ENCODE measurements at regions of chr15 and their contacts with region 1.

Region 1: DNA sequence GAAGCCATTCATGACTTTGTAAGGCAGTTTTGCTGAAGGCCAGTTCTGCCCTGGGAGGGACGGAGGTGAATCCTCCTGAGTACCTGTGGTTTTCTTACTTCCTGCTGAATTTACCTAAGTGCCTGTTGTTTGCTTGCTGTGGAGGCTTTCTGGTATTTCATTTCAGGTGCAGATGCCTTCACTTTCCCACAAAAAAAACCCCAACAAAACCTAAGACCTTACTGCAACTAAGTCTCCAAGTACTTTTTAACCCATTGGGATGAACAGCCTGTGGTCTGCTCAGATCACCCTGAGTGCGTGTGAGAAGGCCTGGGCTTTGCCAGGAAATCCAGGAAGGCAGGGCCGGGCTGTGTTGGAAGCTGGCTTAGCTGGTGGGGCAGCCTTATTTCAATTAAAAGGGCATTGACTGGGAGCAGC is 65.3 kb downstream of the IGF1R start:
- DNase-seq: peak; percentile 47
- ATAC-seq: peak in 1 of 2 donors; percentile 34

Region 2: DNA sequence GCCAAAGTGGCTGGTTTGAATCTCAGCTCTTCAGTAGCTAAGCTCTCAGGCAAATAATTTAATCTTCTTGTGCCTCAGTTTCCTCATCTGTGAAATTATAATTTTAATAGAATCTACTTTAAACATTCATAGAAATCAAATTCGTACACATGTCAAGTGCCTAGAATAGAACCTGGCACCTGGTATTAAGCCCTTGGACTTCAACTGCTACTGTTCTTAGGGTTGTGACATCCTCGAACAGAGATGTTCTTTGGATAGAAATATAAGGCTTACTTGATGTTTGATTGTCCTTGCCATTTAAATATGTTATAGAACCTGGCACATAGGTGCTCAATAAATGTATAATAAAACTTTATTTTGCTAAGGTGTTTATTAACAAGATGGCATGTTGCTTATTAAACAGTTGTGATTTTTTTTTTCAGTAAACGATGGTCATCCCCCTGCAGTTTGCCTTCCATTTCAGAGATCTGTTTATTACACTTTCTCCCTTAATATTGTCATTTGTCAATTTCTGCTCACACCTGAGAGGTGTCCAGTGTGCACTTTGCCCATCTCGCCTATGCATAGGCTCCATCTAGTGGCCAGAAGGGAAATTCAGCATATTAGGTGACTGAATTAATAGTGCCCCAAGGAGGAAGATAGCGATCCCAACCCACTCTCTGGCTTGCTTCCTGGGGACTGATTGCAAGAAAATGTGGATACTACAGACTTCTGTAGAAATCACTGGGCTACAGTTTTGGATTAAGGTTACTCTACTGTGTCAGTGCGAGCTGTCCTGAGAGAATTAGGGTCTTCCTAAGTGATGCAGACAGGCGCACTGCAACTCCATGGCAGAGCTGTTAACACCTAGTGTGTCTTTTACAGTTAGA is 54.5 kb before region 1 on chr15:
- intact Hi-C with region 1: loop called in 1 of 2 experiments (anchors 10 kb)
- DNase-seq: no peak
- ATAC-seq: peak; percentile 74 to 80

Measured in left cardiac atrium (tissue), 4 donors.